Activated CD4-positive, alpha-beta T cell treated with anti-CD3 and anti-CD28 coated beads, Interleukin-2, amount 10 ng/mL, durations not matched to agents 24 days and 14 days (primary cell): ENCODE measurements at regions of chr13 and their contacts with region 1.

Region 1: DNA sequence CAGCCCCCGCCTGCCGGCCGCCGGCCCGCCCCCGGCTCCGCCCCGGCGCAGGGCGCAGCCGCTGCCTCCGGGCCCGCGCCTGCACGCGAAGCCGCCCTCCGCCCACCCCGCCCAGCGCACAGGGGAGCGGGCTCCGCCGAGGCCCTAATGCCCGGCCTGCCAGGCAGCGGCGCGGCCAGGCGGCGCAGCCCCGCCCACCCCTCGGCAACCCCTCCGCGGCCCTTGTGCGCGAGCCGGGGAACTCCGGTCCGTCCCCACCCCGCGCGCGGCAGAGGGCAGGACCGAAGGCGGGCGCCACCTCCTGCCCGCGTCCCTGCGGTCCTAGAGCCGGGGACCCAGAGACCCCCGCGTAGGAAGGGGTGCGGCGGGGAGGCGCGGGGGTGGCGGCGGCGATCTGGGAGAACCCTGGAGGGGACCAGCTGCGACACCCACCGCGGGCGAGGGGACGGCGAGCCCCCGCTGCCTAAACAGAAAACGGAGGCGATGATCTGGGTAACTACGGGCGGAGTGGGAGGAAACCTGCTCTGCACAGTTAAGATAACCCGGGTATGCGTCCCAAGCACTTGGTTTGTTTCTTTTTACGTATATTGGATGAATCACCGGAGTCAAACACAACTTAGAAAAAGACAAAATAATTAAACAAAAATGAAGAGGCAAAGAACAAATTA is 350 bp upstream of the USP12 start:
- DNase-seq: peak; percentile 97
- H3K4me3 Mint-ChIP-seq: peak overlapping the region; percentile 82
- H3K27ac Mint-ChIP-seq: peak overlapping the region; percentile 83
- H3K4me1 Mint-ChIP-seq: peaks cover 45% of the 10 kb centered on the region
- H3K27me3 Mint-ChIP-seq: no peaks in the 10 kb centered on the region

Region 2: DNA sequence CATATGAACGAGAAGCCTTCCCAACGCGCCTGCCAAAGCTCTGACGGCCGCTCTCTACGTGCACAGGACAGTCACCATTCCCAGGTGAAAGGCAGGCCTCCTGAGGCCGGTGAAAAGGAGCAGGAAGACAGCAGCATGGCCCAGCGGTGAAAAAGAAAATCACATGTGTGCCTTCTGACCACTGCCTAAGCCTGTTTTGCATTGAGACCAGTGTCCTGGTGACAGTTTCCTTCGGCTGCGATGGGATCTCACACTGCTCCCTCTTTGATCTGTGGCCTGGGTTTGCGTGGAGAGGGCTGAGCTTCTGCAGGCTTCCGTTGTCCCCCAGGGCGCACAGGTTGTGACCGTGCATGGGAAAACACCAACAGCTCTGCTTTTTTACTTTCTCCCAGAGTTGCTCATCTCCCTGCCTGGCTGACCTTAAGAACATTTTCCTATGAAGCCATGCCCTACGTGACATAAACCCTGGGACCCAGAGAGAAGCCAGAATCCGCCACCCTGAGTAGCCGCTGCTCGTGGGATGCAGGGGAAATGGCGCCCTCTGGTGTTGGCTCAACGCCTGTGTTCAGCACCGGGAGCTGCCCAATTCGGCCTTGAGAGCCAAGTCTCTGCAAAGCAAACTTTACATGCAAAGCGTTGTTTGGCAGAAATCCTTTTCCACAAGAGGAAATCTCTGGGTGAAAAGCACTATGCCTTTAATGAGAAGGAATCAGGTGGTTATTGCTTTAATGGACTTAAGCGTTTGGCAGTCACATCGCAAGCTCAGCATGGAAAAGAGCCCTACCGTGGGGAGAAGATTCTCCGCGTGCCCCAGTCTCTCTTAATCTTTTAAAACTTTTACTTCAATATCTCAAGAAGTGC is 299.2 kb before region 1 on chr13:
- intact Hi-C with region 1: no loop called
- DNase-seq: peak; percentile 84
- H3K4me3 Mint-ChIP-seq: no peak overlapping the region
- H3K27ac Mint-ChIP-seq: no peak overlapping the region
- H3K4me1 Mint-ChIP-seq: no peaks in the 10 kb centered on the region
- H3K27me3 Mint-ChIP-seq: peaks cover 1% of the 10 kb centered on the region

Region 3: DNA sequence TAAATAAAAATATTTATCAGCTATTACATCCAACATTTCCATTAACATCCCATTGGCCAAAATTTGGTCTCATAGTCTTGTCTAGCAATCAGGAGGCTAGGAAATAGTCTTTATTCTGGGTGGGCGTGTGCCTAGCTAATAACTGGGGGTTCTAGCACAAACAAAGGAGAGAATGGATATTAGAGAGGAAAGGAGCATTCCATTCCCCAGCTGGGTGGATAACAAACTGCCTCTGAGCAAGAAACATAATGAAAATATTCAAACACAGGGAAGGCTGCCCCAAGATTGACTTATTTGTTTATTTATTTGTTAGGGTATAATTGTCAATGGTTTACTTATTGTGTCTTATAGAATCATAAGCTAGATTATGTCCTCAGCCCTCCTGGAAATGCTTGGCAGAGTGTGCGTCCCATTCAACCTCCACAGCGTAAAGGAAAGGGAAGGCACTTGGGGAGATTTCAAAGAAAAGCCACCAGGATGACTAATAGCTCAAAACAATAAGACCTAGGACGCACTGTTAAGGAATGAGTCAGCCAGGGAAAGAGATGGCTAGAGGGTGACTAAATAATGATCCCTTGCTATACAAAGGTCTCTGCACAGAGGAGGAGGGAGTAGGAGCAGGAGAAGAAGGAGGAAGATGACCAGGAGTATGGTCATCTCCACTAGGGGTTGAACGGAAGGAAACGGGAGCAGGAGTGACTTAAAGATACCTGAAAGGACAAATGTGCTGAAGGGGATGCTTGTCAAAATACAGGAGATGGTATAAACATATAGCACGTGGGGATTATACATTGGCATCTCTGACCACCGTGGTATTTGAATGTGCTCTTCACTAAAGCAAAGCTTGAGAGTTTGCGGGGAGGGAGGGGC is 23.2 kb after region 1 on chr13:
- intact Hi-C with region 1: loop called (anchors 1 kb)
- DNase-seq: no peak
- H3K4me3 Mint-ChIP-seq: peak overlapping the region; percentile 19
- H3K27ac Mint-ChIP-seq: peak overlapping the region; percentile 15
- H3K4me1 Mint-ChIP-seq: peaks cover 16% of the 10 kb centered on the region
- H3K27me3 Mint-ChIP-seq: peaks cover 2% of the 10 kb centered on the region

Region 4: DNA sequence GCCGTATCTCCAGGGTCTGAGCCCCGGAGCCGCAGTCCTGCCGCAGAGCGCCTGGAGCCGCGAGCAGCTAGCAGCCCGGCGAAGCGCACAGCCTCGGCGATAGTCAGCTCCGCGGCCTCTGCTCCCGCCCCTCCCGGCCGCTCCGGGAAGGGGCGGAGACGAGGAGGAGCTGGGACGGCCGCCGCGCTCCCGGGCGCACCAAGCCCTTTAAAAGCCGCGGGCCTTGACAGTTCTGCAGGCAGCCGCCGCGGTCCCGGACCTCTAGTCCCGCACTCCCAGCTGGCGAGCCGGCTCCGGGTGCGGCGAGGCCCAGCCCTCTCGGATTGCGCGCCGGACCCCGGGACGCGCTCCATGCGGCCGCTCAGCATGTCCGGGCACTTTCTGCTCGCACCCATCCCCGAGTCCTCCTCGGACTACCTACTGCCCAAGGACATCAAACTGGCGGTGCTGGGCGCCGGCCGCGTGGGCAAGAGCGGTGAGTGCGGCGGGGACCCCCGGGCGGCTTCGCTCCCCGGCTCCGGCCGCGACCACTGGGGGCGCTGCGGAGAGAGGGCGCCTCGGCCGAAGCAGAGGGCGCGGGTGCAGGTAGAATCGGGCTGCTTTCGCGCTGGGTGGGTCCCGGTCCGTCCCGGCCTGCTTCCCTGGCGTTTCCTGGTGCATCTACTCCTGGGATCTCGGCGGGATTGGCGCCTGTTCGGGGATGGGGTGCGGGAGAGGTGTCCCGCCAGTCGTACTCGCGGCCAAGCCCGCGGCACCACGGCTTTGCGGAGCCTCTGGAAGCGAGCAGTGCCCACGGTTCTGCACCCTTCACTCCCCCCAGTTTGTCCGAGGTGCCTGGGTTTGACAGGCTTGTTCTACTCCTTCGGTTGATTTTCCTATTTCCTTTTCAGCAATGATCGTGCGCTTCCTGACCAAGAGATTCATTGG is 98.9 kb after region 1 on chr13 and contains the start of gene RASL11A:
- intact Hi-C with region 1: loop called (anchors 5 kb)
- DNase-seq: peak; percentile 93
- H3K4me3 Mint-ChIP-seq: peak within 1 kb of the TSS; percentile 90
- H3K27ac Mint-ChIP-seq: no peak within 1 kb of the TSS
- H3K4me1 Mint-ChIP-seq: peaks cover 11% of the 10 kb centered on the region
- H3K27me3 Mint-ChIP-seq: peaks cover 35% of the 10 kb centered on the region
- total RNA-seq, gene RASL11A: 1.8 and 2.8 TPM in 2 replicates

Region 5: GRCh38 chr13:27424246-27425157 is 252.5 kb after region 1 on chr13 and contains the start of gene GTF3A:
- intact Hi-C with region 1: loop called (anchors 2 kb)
- DNase-seq: peak; percentile 97
- H3K4me3 Mint-ChIP-seq: peak within 1 kb of the TSS; percentile 86
- H3K27ac Mint-ChIP-seq: peak within 1 kb of the TSS; percentile 95
- H3K4me1 Mint-ChIP-seq: peaks cover 35% of the 10 kb centered on the region
- H3K27me3 Mint-ChIP-seq: no peaks in the 10 kb centered on the region
- total RNA-seq, gene GTF3A: 279 and 284 TPM in 2 replicates

Region 6: DNA sequence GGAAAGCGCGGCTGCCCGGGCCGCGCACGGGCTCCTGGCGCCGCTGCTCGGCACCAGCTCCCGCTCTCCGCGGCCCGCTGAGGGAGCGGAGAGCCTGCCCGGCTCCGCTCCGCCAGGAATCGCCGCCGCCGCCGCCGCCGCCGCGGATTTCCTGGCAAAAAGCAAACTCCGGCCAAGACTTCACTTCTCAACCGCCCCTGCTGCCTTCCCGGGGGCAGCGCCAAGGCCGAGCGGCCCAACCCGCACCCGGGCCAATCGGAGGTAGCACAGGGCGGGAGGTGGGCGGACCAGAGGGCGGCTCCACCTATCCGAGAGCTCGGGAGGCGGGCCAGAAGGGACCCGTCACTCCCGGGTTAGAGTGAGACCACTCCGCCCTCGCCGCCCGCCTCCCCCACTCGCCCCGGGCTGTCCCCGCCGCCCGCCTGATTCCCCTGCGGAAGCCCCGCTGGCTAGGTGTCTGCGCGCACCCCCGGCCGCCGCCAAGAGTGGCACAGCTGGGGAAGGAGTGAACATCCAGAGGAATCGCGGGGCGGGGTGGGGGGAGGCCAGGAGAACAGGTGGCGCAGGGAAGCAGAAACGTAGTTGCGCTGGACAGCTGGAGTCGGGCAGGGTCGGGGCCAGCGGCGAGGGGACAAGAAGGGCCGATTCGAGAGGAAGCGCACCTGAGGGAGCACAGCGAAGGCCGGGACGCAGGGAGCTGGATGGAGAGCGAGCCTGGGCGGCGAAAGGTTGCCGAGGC is 448.6 kb after region 1 on chr13 and contains the start of gene LNX2:
- intact Hi-C with region 1: loop called (anchors 2 kb)
- DNase-seq: peak; percentile 99
- H3K4me3 Mint-ChIP-seq: peak within 1 kb of the TSS; percentile 98
- H3K27ac Mint-ChIP-seq: peak within 1 kb of the TSS; percentile 93
- H3K4me1 Mint-ChIP-seq: peaks cover 44% of the 10 kb centered on the region
- H3K27me3 Mint-ChIP-seq: no peaks in the 10 kb centered on the region
- total RNA-seq, gene LNX2: 4.1 and 4.3 TPM in 2 replicates